Posterior vena cava (tissue), 2 donors: ENCODE measurements at regions of chr19 and their contacts with region 1.

Region 1: DNA sequence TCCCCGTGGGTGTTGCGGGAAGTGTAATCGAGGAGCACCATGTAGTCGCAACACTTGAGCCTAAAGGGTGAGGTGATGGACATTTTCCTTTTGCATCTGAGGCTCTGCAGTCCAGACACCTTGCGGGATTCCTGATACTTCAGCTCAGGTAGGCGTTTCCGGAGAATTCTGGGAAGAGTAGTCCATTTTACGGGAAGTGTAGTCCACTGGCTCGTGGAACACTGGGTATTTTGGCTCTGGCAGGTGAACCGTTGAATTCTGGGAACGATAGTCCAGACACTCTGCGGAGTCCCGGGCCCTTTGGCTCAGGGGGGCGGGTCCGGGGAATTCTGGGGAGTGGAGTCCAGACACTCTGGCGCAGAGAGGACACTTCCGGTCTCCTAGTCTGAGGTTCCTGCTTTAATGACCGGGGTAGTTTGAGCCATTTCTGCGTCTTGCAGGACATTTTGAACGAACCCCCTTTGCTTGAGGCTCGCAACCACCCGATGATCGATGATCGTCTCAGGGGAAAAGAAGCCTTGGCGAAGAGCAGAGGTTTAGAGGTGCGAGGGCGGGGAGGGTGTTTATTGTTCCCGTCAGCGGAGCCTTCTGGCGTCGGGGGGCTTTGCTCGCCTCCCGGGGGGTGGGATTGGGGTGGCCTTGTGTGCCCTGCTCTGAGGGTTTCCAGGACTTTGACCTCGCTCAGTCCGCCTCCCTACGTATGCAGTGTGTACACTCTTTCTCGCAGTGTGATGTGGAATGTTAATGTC is at the start of gene ZNF223:
- DNase-seq: peak; percentile 98
- total RNA-seq, gene ZNF223: 2.8 to 3.7 TPM

Region 2: GRCh38 chr19:44083866-44084265 is 32.0 kb after region 1 on chr19:
- intact Hi-C with region 1: no loop called
- DNase-seq: no peak

Region 3: DNA sequence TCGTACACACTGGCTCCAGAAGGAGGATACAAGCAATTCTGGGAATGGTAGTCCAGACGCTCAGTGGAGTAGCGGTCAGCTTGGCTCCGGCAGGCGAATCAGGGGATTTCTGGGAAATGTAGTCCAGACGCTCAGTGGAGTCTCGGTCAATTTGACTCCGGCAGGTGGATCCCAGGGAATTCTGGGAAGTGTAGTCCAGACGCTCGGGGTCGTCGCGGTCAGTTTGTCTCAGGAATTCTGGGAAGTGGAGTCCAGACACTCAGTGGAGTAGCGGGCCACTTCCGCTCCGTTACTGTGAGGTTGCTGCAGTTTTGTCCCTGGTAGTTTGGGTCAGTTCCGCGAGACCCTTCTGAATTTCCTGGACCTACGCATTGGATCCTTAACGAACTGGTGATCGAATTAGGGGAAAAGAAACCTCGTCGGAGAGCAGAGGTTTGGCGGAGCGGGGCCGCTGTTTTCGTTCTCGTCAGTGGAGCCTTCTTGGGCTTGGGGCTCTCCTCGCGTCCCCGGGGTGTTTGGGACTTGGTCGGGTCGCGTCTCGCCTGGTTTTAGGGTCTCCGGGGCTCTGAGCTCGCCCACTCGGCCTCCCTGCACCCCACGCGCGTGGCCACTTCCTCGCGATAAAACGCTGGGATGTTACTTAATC is 61.4 kb after region 1 on chr19 and contains the start of gene ZNF225:
- intact Hi-C with region 1: loop called in 1 of 2 experiments (anchors 10 kb)
- DNase-seq: peak; percentile 96
- total RNA-seq, gene ZNF225: 3.5 to 6.0 TPM